CD8-positive, alpha-beta memory T cell (primary cell): ENCODE measurements at regions of chr1 and their contacts with region 1.

Region 1: GRCh38 chr1:153946622-153947241 is at the start of gene DENND4B:
- DNase-seq: peak; percentile 60 to 82 (median 71)
- H3K4me3 ChIP-seq: peak within 1 kb of the TSS; percentile 83
- H3K4me3 Mint-ChIP-seq: peak within 1 kb of the TSS; percentile 94 to 99 (median 98)
- H3K27ac ChIP-seq: peak within 1 kb of the TSS; percentile 91
- H3K27ac Mint-ChIP-seq: peak within 1 kb of the TSS; percentile 93 to 100 (median 98)
- H3K4me1 ChIP-seq: peaks cover 31% of the 10 kb centered on the region
- H3K4me1 Mint-ChIP-seq: peaks cover 30 to 42% (median 37%) of the 10 kb centered on the region in 3 donors
- H3K27me3 ChIP-seq: no peaks in the 10 kb centered on the region
- H3K27me3 Mint-ChIP-seq: peaks cover 0 to 4% of the 10 kb centered on the region in 2 donors
- total RNA-seq, gene DENND4B: 100 to 102 TPM

Region 2: DNA sequence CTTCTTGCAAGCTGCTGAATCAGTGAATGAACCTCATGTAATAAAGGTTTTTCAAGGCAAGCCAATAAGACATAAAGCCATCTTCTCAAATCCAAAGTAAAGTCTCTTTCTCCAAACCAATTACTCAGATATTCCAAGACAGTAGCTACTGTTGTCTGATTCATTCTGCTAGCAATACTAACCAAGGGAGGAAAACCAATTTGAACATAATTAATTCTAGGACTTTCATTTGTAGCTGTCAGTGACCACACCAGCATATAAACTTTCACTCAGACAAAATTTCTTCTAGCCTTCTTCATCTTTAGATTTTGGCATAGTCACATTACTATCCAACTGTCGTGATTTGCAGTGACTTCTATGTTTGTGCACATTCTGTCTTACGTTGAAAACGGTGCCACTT is 229.4 kb before region 1 on chr1:
- CTCF ChIA-PET with region 1: no interaction called
- POLR2A ChIA-PET with region 1: no interaction called
- DNase-seq: no peak
- H3K4me3 ChIP-seq: no peak overlapping the region
- H3K4me3 Mint-ChIP-seq: no peak overlapping the region
- H3K27ac ChIP-seq: no peak overlapping the region
- H3K27ac Mint-ChIP-seq: peak overlapping the region in 1 of 8 donors; percentile 15
- H3K4me1 ChIP-seq: no peaks in the 10 kb centered on the region
- H3K4me1 Mint-ChIP-seq: no peaks in the 10 kb centered on the region
- H3K27me3 ChIP-seq: no peaks in the 10 kb centered on the region
- H3K27me3 Mint-ChIP-seq: peaks cover 4 to 6% of the 10 kb centered on the region in 2 donors

Region 3: GRCh38 chr1:153742411-153743142 is 204.2 kb before region 1 on chr1:
- CTCF ChIA-PET with region 1: no interaction called
- POLR2A ChIA-PET with region 1: no interaction called
- DNase-seq: no peak
- H3K4me3 ChIP-seq: no peak overlapping the region
- H3K4me3 Mint-ChIP-seq: no peak overlapping the region
- H3K27ac ChIP-seq: no peak overlapping the region
- H3K27ac Mint-ChIP-seq: peak overlapping the region in 3 of 8 donors; percentile 30 to 63 (median 59)
- H3K4me1 ChIP-seq: no peaks in the 10 kb centered on the region
- H3K4me1 Mint-ChIP-seq: peaks cover 4 to 14% (median 5%) of the 10 kb centered on the region in 3 donors
- H3K27me3 ChIP-seq: no peaks in the 10 kb centered on the region
- H3K27me3 Mint-ChIP-seq: no peaks in the 10 kb centered on the region

Region 4: DNA sequence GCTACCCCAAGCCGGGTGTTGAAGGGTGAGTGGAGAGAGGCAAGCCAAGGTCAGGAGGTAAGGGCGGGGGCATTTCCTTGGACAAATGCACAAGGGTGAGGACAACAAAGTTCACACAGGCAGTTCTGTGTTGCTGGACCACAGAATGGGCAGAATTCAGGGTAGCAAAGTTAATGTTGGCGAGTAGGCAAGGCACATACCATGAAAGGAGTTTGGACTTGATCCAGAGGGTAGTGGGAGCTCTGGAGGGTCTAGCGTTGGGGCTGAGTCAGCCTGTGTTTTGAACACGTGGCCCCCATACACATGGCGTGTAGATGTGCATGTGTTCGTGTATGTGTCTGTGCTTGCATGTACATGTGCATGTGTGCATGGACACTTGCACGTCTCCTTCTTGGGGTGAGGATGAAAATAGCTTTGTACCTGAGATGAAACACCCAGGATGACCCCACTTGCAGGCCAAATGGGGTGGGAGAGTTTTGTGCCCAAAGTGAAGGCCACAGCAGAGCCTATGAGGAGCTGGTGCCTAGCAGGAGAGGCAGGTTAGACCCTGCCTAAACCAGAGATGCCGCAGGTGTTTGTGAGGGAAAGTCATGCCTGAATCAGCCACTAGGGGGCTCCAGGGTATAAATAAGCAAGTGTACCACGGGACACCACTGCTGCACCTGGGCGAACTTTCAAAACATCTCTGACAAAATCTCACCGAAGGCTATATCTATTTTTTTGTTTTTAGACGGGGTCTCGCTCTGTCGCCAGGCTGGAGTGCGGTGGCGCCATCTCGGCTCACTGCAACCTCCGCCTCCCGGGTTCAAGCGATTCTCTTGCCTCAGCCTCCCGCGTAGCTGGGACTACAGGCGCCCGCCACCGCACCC is 149.7 kb before region 1 on chr1:
- CTCF ChIA-PET with region 1: interaction called, 18 read pairs
- POLR2A ChIA-PET with region 1: interaction called, 6 read pairs
- DNase-seq: peak; percentile 74 to 87 (median 77)
- H3K4me3 ChIP-seq: no peak overlapping the region
- H3K4me3 Mint-ChIP-seq: peak overlapping the region in 3 of 7 donors; percentile 1 to 28 (median 20)
- H3K27ac ChIP-seq: no peak overlapping the region
- H3K27ac Mint-ChIP-seq: peak overlapping the region in 7 of 8 donors; percentile 8 to 87 (median 69)
- H3K4me1 ChIP-seq: peaks cover 12% of the 10 kb centered on the region
- H3K4me1 Mint-ChIP-seq: peaks cover 16 to 29% (median 17%) of the 10 kb centered on the region in 3 donors
- H3K27me3 ChIP-seq: no peaks in the 10 kb centered on the region
- H3K27me3 Mint-ChIP-seq: peaks cover 0 to 2% of the 10 kb centered on the region in 2 donors

Region 5: GRCh38 chr1:153805042-153805745 is 141.5 kb before region 1 on chr1:
- CTCF ChIA-PET with region 1: interaction called, 10 read pairs
- POLR2A ChIA-PET with region 1: interaction called, 11 read pairs
- DNase-seq: peak; percentile 50 to 92 (median 83)
- H3K4me3 ChIP-seq: no peak overlapping the region
- H3K4me3 Mint-ChIP-seq: peak overlapping the region; percentile 2 to 64 (median 41)
- H3K27ac ChIP-seq: peak overlapping the region; percentile 74
- H3K27ac Mint-ChIP-seq: peak overlapping the region; percentile 66 to 96 (median 86)
- H3K4me1 ChIP-seq: peaks cover 22% of the 10 kb centered on the region
- H3K4me1 Mint-ChIP-seq: peaks cover 40 to 50% (median 41%) of the 10 kb centered on the region in 3 donors
- H3K27me3 ChIP-seq: no peaks in the 10 kb centered on the region
- H3K27me3 Mint-ChIP-seq: no peaks in the 10 kb centered on the region

Region 6: GRCh38 chr1:153922972-153923925 is 23.5 kb before region 1 on chr1 and contains the start of gene GATAD2B:
- CTCF ChIA-PET with region 1: interaction called, 58 read pairs
- POLR2A ChIA-PET with region 1: interaction called, 56 read pairs
- DNase-seq: peak; percentile 97 to 100 (median 99)
- H3K4me3 ChIP-seq: peak within 1 kb of the TSS; percentile 98
- H3K4me3 Mint-ChIP-seq: peak within 1 kb of the TSS; percentile 79 to 97 (median 94)
- H3K27ac ChIP-seq: peak within 1 kb of the TSS; percentile 96
- H3K27ac Mint-ChIP-seq: peak within 1 kb of the TSS; percentile 95 to 100 (median 98)
- H3K4me1 ChIP-seq: peaks cover 44% of the 10 kb centered on the region
- H3K4me1 Mint-ChIP-seq: peaks cover 46 to 60% (median 52%) of the 10 kb centered on the region in 3 donors
- H3K27me3 ChIP-seq: no peaks in the 10 kb centered on the region
- H3K27me3 Mint-ChIP-seq: peaks cover 0 to 4% of the 10 kb centered on the region in 2 donors
- total RNA-seq, gene GATAD2B: 64.9 to 71.9 TPM

Region 7: GRCh38 chr1:153958111-153958960 is 11.6 kb after region 1 on chr1 and contains the start of gene CRTC2:
- CTCF ChIA-PET with region 1: interaction called, 46 read pairs
- POLR2A ChIA-PET with region 1: interaction called, 55 read pairs
- DNase-seq: peak; percentile 95 to 98 (median 95)
- H3K4me3 ChIP-seq: peak within 1 kb of the TSS; percentile 74
- H3K4me3 Mint-ChIP-seq: peak within 1 kb of the TSS; percentile 93 to 99 (median 98)
- H3K27ac ChIP-seq: peak within 1 kb of the TSS; percentile 78
- H3K27ac Mint-ChIP-seq: peak within 1 kb of the TSS; percentile 61 to 98 (median 98)
- H3K4me1 ChIP-seq: peaks cover 52% of the 10 kb centered on the region
- H3K4me1 Mint-ChIP-seq: peaks cover 51 to 70% (median 57%) of the 10 kb centered on the region in 3 donors
- H3K27me3 ChIP-seq: no peaks in the 10 kb centered on the region
- H3K27me3 Mint-ChIP-seq: no peaks in the 10 kb centered on the region
- total RNA-seq, gene CRTC2: 53.9 to 63.2 TPM

Region 8: DNA sequence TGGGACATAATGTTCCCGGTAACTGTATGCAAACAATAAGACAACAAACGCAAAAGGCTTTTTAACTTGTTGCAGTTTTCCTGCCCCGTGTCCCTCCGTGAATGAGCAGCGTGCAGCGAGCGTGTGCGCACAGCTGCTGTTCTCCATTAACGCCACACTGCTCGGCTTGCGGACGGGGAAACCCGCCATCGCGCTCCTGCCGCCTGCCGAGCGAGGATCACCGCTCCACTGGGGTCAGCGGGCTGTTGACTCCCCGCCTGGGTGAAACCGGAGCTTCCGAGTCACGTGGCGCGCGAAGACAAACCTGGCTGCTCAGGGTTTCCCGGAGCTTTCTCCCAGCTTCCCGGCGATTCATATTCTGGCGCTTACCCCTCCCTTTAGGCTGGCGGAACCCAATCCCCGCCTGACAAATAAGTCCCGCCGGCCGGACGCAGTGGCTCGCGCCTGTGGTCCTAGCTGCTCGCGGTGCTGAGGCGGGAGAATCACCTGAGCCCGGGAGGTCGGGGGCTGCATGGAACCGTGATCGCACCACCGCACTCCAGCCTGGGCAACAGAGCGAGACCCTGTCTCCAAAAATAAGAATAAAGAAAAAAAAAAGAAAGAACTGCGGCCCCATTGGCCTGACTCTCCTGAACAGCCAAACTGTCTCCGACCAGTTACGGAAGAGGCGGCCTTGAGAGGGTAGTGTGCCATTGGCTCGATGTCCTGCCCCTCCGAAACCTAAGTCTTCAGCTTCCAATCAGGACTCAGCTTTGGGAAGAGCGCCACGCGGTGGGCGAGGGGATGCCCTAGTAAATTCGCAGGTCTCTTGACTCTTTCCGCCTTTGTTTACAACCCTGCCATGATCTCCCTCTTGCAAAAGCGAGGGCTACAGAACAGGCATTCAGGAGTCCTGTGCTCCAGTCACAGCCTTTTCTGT is 20.6 kb after region 1 on chr1 and contains the start of gene CREB3L4:
- CTCF ChIA-PET with region 1: interaction called, 50 read pairs
- POLR2A ChIA-PET with region 1: interaction called, 50 read pairs
- DNase-seq: peak; percentile 70 to 89 (median 85)
- H3K4me3 ChIP-seq: peak within 1 kb of the TSS; percentile 53
- H3K4me3 Mint-ChIP-seq: peak within 1 kb of the TSS; percentile 92 to 97 (median 96)
- H3K27ac ChIP-seq: peak within 1 kb of the TSS; percentile 62
- H3K27ac Mint-ChIP-seq: peak within 1 kb of the TSS; percentile 86 to 99 (median 97)
- H3K4me1 ChIP-seq: peaks cover 39% of the 10 kb centered on the region
- H3K4me1 Mint-ChIP-seq: peaks cover 45 to 63% (median 52%) of the 10 kb centered on the region in 3 donors
- H3K27me3 ChIP-seq: no peaks in the 10 kb centered on the region
- H3K27me3 Mint-ChIP-seq: no peaks in the 10 kb centered on the region
- total RNA-seq, gene CREB3L4: 10.0 to 10.1 TPM

Region 9: GRCh38 chr1:153977250-153978240 is 30.8 kb after region 1 on chr1 and contains the start of gene JTB:
- CTCF ChIA-PET with region 1: interaction called, 21 read pairs
- POLR2A ChIA-PET with region 1: interaction called, 20 read pairs
- DNase-seq: peak; percentile 74 to 90 (median 81)
- H3K4me3 ChIP-seq: peak within 1 kb of the TSS; percentile 93
- H3K4me3 Mint-ChIP-seq: peak within 1 kb of the TSS; percentile 91 to 99 (median 98)
- H3K27ac ChIP-seq: peak within 1 kb of the TSS; percentile 88
- H3K27ac Mint-ChIP-seq: peak within 1 kb of the TSS; percentile 88 to 100 (median 96)
- H3K4me1 ChIP-seq: peaks cover 18% of the 10 kb centered on the region
- H3K4me1 Mint-ChIP-seq: peaks cover 28 to 39% (median 30%) of the 10 kb centered on the region in 3 donors
- H3K27me3 ChIP-seq: no peaks in the 10 kb centered on the region
- H3K27me3 Mint-ChIP-seq: peaks cover 0 to 1% of the 10 kb centered on the region in 2 donors
- total RNA-seq, gene JTB: 232 to 239 TPM